Naive thymus-derived CD4-positive, alpha-beta T cell (primary cell): ENCODE measurements at regions of chr1 and their contacts with region 1.

Region 1: DNA sequence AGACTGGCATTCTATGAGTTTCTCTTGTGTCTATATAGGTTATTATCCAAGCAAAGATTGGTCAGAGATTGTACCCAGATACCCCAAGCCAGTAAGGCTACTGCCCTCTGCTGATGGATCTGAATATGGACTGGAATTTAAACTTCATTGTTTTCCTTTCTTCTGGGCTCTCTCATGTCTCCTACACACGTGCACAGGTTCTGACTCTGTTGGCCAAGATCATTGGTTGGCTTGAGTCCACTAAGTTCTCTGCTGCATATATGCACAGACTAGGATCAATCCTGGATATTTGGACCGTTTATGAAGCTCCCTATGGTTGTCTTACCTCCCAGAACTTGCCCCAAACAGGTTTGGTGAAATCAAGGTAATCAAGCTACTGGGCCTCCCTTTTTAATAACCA is 69.7 kb downstream of the CC2D1B start:
- DNase-seq: peak in 7 of 9 donors; percentile 5 to 32 (median 19)
- ATAC-seq: peak; percentile 55
- H3K4me3 ChIP-seq: no peak overlapping the region
- H3K4me3 Mint-ChIP-seq: no peak overlapping the region
- H3K27ac ChIP-seq: no peak overlapping the region
- H3K27ac Mint-ChIP-seq: peak overlapping the region in 1 of 9 donors; percentile 0
- H3K4me1 ChIP-seq: no peaks in the 10 kb centered on the region
- H3K4me1 Mint-ChIP-seq: peaks cover 0 to 2% (median 0%) of the 10 kb centered on the region in 7 donors
- H3K27me3 ChIP-seq: no peaks in the 10 kb centered on the region
- H3K27me3 Mint-ChIP-seq: no peaks in the 10 kb centered on the region

Region 2: DNA sequence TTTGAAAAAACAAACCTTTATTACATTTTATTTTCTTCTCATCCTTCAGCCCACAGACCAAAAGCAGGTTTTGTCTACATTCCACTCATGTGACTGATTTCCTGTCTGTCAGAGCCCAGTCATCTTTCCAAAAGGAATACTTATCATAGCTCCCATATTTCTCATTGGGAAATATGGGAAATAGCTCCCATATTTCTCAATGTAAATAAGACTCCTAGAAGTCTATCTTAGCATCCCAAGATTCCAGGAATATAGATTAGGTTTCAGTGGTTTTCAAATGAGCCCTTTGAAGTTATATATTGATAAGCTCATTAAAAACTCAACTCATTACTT is 398.7 kb before region 1 on chr1:
- CTCF ChIA-PET with region 1: interaction called, 3 read pairs
- POLR2A ChIA-PET with region 1: no interaction called
- intact Hi-C with region 1: loop called (anchors 1 to 5 kb)
- DNase-seq: no peak
- ATAC-seq: no peak
- H3K4me3 ChIP-seq: no peak overlapping the region
- H3K4me3 Mint-ChIP-seq: no peak overlapping the region
- H3K27ac ChIP-seq: no peak overlapping the region
- H3K27ac Mint-ChIP-seq: no peak overlapping the region
- H3K4me1 ChIP-seq: no peaks in the 10 kb centered on the region
- H3K4me1 Mint-ChIP-seq: peaks cover 0 to 4% (median 0%) of the 10 kb centered on the region in 7 donors
- H3K27me3 ChIP-seq: peaks cover 0 to 3% of the 10 kb centered on the region in 2 donors
- H3K27me3 Mint-ChIP-seq: peaks cover 24 to 55% (median 50%) of the 10 kb centered on the region in 5 donors

Region 3: GRCh38 chr1:52127181-52128180 is 168.9 kb before region 1 on chr1:
- CTCF ChIA-PET with region 1: interaction called, 12 read pairs
- POLR2A ChIA-PET with region 1: interaction called, 3 read pairs
- intact Hi-C with region 1: loop called in 1 of 2 experiments (anchors 1 kb)
- DNase-seq: peak in 3 of 9 donors; percentile 14 to 27 (median 25)
- ATAC-seq: peak; percentile 64
- H3K4me3 ChIP-seq: no peak overlapping the region
- H3K4me3 Mint-ChIP-seq: no peak overlapping the region
- H3K27ac ChIP-seq: no peak overlapping the region
- H3K27ac Mint-ChIP-seq: no peak overlapping the region
- H3K4me1 ChIP-seq: no peaks in the 10 kb centered on the region
- H3K4me1 Mint-ChIP-seq: peaks cover 0 to 4% (median 0%) of the 10 kb centered on the region in 7 donors
- H3K27me3 ChIP-seq: no peaks in the 10 kb centered on the region
- H3K27me3 Mint-ChIP-seq: peaks cover 0 to 47% (median 9%) of the 10 kb centered on the region in 5 donors